ENCODE measurements at regions of chr2 and their contacts with region 1.

Region 1: DNA sequence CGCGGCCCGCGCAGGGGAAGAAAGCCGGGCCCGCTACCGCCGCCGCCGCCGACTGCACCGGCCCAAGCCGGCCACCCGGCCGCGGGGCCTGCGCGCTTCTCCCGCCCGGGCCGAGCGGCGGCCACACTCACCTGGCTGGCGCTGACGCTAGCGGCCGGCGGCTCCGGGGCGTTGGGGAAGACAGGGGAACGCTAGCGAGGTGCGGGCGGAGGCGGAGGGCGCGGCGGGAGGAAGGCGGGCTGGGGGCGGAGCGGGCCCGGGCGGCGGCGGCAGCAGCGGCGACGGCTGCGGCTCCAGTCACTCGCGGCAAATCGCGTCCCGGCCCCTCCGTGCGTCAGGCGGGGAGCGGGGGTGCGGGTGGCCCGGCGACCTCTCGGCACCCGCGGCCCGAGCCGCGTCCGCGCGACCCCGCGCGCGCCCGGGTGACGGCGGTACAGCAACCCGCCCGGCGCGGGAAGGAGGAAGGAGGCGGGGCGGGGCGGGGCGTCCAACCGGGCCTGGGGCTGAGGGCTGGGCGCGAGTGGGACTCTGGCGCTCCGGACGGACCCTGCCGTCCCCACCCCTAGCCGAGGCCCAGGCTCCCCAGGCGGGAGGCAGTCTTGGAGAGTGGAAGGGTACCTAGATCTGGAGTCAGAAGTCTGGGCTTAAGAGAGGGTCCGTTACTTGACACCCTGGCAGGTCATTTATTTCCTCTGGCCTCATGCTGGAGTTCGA is at the start of gene SESTD1:
- DNase-seq: peak; percentile 88
- total RNA-seq, gene SESTD1: 48.9 TPM

Region 2: GRCh38 chr2:179226203-179226960 is 38.1 kb before region 1 on chr2:
- intact Hi-C with region 1: loop called (anchors 5 kb)
- DNase-seq: no peak

Region 3: DNA sequence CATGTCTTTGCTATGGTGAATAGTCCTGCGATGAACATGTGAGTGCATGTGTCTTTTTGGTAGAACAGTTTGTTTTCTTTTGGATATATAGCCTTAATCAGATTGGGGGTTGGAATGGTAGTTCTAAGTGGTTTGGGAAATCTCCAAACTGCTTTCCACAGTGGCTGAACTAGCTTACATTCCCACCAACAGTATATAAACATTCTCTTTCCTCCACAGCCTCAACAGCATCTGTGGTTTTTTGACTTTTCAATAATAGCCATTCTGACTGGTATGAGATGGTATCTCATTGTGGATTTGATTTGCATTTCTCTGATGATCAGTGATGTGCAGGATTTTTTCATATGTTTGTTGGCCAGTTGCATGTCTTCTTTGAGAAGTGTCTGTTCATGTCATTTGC is 112.4 kb after region 1 on chr2:
- intact Hi-C with region 1: no loop called
- DNase-seq: no peak